CD8-positive, alpha-beta T cell (primary cell): ENCODE measurements at regions of chr2 and their contacts with region 1.

Region 1: GRCh38 chr2:149587220-149587949 is at the start of gene MMADHC:
- DNase-seq: peak; percentile 86 to 97 (median 92)
- ATAC-seq: peak; percentile 96
- H3K4me3 ChIP-seq: peak within 1 kb of the TSS; percentile 79 to 86
- H3K4me3 Mint-ChIP-seq: peak within 1 kb of the TSS; percentile 94
- H3K27ac ChIP-seq: peak within 1 kb of the TSS; percentile 88 to 95
- H3K27ac Mint-ChIP-seq: peak within 1 kb of the TSS; percentile 98
- H3K4me1 ChIP-seq: peaks cover 34% of the 10 kb centered on the region
- H3K4me1 Mint-ChIP-seq: peaks cover 44% of the 10 kb centered on the region
- H3K27me3 ChIP-seq: no peaks in the 10 kb centered on the region
- H3K27me3 Mint-ChIP-seq: peaks cover 7% of the 10 kb centered on the region
- CTCF ChIP-seq: no peak
- total RNA-seq, gene MMADHC: 74.1 to 84.7 TPM

Region 2: DNA sequence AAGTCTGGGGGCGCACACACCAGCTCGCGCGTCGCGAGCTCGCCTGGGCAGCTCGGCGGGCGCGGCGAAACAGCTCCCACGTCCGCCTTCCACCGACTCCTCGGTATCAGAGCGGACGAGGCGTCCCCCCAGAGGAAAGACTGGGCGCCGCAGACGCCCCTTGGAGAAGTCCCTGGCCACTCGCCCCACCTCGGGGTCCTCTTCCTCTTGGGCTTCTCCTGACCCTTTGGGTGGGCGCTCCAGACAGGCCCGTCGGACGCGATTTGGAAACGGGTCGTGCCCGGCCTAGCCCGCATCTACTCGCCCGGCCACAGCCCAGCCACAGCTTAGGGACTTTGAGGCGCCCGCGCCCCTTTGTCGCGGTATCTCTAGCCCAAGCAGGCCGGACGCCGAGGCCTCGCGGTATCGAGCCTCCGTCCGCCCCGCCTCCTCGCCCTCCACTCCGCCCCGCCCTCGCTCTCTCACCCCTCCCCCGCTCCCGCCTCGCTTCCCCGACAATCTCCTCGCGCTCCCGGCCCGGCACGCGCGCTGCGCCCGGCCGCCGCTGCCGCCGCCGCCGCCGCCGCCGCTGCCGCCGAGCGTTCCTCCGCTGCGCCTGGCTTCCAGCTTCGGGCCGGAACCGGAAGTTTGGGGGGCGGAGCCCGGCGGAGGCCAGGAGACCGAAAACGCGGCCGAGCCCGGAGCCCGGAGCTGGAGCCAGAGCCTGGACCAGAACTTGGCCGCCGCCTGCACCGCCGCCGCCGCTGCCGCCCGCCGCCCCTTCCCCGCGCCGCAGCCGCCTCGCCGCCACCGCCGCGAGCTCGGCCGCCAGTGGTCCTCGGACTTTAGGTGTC is 1743.3 kb before region 1 on chr2:
- CTCF ChIA-PET with region 1: no interaction called
- POLR2A ChIA-PET with region 1: no interaction called
- intact Hi-C with region 1: loop called (anchors 5 to 10 kb)
- DNase-seq: peak; percentile 71 to 90 (median 86)
- ATAC-seq: peak; percentile 80
- H3K4me3 ChIP-seq: peak overlapping the region; percentile 75 to 79
- H3K4me3 Mint-ChIP-seq: peak overlapping the region; percentile 93
- H3K27ac ChIP-seq: peak overlapping the region; percentile 51 to 54
- H3K27ac Mint-ChIP-seq: peak overlapping the region; percentile 55
- H3K4me1 ChIP-seq: peaks cover 19% of the 10 kb centered on the region
- H3K4me1 Mint-ChIP-seq: peaks cover 29% of the 10 kb centered on the region
- H3K27me3 ChIP-seq: no peaks in the 10 kb centered on the region
- H3K27me3 Mint-ChIP-seq: peaks cover 20% of the 10 kb centered on the region
- CTCF ChIP-seq: no peak

Region 3: DNA sequence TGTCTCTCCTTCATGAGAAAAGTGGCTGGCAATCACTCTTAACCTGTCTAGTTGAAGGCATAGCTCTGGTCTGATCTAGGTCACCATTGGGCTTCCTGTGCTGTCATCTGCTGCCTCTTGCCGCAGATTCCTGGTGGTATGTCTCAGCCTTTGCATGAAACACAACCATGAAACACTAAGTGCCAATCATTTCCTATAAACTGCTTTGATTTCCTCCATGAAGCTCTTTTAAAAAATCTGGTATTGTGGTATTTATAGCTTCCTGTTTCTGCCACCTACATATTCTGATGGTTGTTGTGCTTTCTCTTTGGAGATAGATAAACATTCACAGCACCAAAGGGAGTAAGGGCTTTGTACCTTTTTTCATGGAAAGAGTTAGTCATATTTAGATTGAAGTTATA is 1062.9 kb before region 1 on chr2:
- CTCF ChIA-PET with region 1: no interaction called
- POLR2A ChIA-PET with region 1: no interaction called
- intact Hi-C with region 1: loop called in 1 of 2 experiments (anchors 10 kb)
- DNase-seq: peak in 8 of 9 experiments; percentile 19 to 86 (median 60)
- ATAC-seq: peak; percentile 91
- H3K4me3 ChIP-seq: no peak overlapping the region
- H3K4me3 Mint-ChIP-seq: peak overlapping the region; percentile 53
- H3K27ac ChIP-seq: peak overlapping the region; percentile 25 to 26
- H3K27ac Mint-ChIP-seq: peak overlapping the region; percentile 84
- H3K4me1 ChIP-seq: peaks cover 90% of the 10 kb centered on the region
- H3K4me1 Mint-ChIP-seq: peaks cover 90% of the 10 kb centered on the region
- H3K27me3 ChIP-seq: no peaks in the 10 kb centered on the region
- H3K27me3 Mint-ChIP-seq: no peaks in the 10 kb centered on the region
- CTCF ChIP-seq: no peak

Region 4: GRCh38 chr2:148853458-148853857 is 733.9 kb before region 1 on chr2:
- CTCF ChIA-PET with region 1: no interaction called
- POLR2A ChIA-PET with region 1: no interaction called
- intact Hi-C with region 1: no loop called
- DNase-seq: no peak
- ATAC-seq: no peak
- H3K4me3 ChIP-seq: no peak overlapping the region
- H3K4me3 Mint-ChIP-seq: no peak overlapping the region
- H3K27ac ChIP-seq: no peak overlapping the region
- H3K27ac Mint-ChIP-seq: no peak overlapping the region
- H3K4me1 ChIP-seq: no peaks in the 10 kb centered on the region
- H3K4me1 Mint-ChIP-seq: no peaks in the 10 kb centered on the region
- H3K27me3 ChIP-seq: no peaks in the 10 kb centered on the region
- H3K27me3 Mint-ChIP-seq: peaks cover 31% of the 10 kb centered on the region
- CTCF ChIP-seq: no peak

Region 5: GRCh38 chr2:148874868-148875341 is 712.5 kb before region 1 on chr2 and contains the start of gene KIF5C:
- CTCF ChIA-PET with region 1: no interaction called
- POLR2A ChIA-PET with region 1: no interaction called
- intact Hi-C with region 1: loop called (anchors 2 to 5 kb)
- DNase-seq: peak; percentile 77 to 94 (median 87)
- ATAC-seq: peak; percentile 87
- H3K4me3 ChIP-seq: peak within 1 kb of the TSS; percentile 49 to 52
- H3K4me3 Mint-ChIP-seq: peak within 1 kb of the TSS; percentile 86
- H3K27ac ChIP-seq: no peak within 1 kb of the TSS
- H3K27ac Mint-ChIP-seq: peak within 1 kb of the TSS; percentile 41
- H3K4me1 ChIP-seq: peaks cover 12% of the 10 kb centered on the region
- H3K4me1 Mint-ChIP-seq: peaks cover 18% of the 10 kb centered on the region
- H3K27me3 ChIP-seq: peaks cover 0 to 5% of the 10 kb centered on the region in 2 experiments
- H3K27me3 Mint-ChIP-seq: peaks cover 16% of the 10 kb centered on the region
- CTCF ChIP-seq: no peak
- total RNA-seq, gene KIF5C: 6.4 to 6.5 TPM

Region 6: DNA sequence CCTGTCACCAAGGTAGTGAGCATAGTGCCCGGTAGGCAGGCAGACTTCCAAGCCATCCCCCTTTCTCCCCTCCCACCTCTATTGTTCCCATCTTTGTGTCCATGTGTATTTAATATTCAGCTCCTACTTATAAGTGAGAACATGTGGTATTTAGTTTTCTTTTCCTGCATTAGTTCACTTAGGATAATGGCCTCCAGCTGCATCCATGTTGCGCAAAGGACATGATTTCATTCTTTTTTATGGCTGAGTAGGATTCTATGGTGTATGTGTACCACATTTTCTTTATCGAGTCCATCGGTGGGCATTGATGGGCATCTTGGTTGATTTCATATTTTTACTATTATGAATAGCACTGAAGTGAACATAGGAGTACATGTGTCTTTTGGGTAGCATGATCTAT is 35.2 kb before region 1 on chr2:
- CTCF ChIA-PET with region 1: no interaction called
- POLR2A ChIA-PET with region 1: no interaction called
- intact Hi-C with region 1: no loop called
- DNase-seq: no peak
- ATAC-seq: no peak
- H3K4me3 ChIP-seq: no peak overlapping the region
- H3K4me3 Mint-ChIP-seq: no peak overlapping the region
- H3K27ac ChIP-seq: no peak overlapping the region
- H3K27ac Mint-ChIP-seq: no peak overlapping the region
- H3K4me1 ChIP-seq: no peaks in the 10 kb centered on the region
- H3K4me1 Mint-ChIP-seq: no peaks in the 10 kb centered on the region
- H3K27me3 ChIP-seq: no peaks in the 10 kb centered on the region
- H3K27me3 Mint-ChIP-seq: peaks cover 8% of the 10 kb centered on the region
- CTCF ChIP-seq: no peak

Region 7: DNA sequence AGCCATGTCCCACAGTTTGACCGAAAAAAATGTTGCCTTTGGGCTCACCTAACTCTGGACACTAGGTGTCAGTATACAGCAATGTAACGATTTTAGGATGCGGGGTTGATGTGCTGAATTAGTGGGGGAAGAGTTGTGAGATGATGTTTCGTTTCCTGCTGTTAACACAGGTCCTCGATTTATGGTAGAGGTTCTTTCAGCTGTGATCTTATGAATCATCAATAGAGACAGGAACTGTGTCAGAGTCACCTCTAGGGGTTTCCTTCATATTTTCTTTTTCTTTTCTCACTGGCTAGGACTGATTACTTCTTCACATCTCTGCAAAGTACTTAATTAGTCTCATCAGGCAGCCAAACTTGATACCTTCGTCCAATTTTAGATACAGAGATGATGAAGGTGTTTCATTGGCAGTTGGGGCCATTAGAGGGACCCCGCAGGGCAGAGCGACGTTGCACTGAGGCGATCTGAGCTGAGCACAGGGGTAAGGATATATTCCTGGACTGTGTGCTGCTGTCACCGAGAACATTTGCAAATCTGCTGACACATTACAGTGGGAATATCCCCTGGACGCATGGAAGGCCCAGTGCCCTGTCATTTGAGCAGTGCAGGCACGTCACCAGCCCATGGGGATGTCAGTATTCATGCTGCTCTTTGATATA is 10.4 kb after region 1 on chr2:
- CTCF ChIA-PET with region 1: interaction called, 11 read pairs
- POLR2A ChIA-PET with region 1: interaction called, 3 read pairs
- intact Hi-C with region 1: no loop called
- DNase-seq: peak; percentile 6 to 84 (median 45)
- ATAC-seq: peak; percentile 96
- H3K4me3 ChIP-seq: no peak overlapping the region
- H3K4me3 Mint-ChIP-seq: peak overlapping the region; percentile 53
- H3K27ac ChIP-seq: peak overlapping the region in 1 of 2 experiments; percentile 14
- H3K27ac Mint-ChIP-seq: no peak overlapping the region
- H3K4me1 ChIP-seq: peaks cover 3% of the 10 kb centered on the region
- H3K4me1 Mint-ChIP-seq: peaks cover 14% of the 10 kb centered on the region
- H3K27me3 ChIP-seq: no peaks in the 10 kb centered on the region
- H3K27me3 Mint-ChIP-seq: peaks cover 13% of the 10 kb centered on the region
- CTCF ChIP-seq: peak; percentile 82

Region 8: GRCh38 chr2:151261231-151261976 is 1674.0 kb after region 1 on chr2 and contains the start of gene RBM43:
- CTCF ChIA-PET with region 1: no interaction called
- POLR2A ChIA-PET with region 1: interaction called, 12 read pairs
- intact Hi-C with region 1: loop called (anchors 2 to 5 kb)
- DNase-seq: peak; percentile 60 to 94 (median 82)
- ATAC-seq: peak; percentile 87
- H3K4me3 ChIP-seq: peak within 1 kb of the TSS; percentile 68
- H3K4me3 Mint-ChIP-seq: peak within 1 kb of the TSS; percentile 90
- H3K27ac ChIP-seq: peak within 1 kb of the TSS; percentile 91 to 96
- H3K27ac Mint-ChIP-seq: peak within 1 kb of the TSS; percentile 98
- H3K4me1 ChIP-seq: peaks cover 5% of the 10 kb centered on the region
- H3K4me1 Mint-ChIP-seq: peaks cover 38% of the 10 kb centered on the region
- H3K27me3 ChIP-seq: no peaks in the 10 kb centered on the region
- H3K27me3 Mint-ChIP-seq: no peaks in the 10 kb centered on the region
- CTCF ChIP-seq: no peak
- total RNA-seq, gene RBM43: 12.1 to 12.4 TPM

Region 9: GRCh38 chr2:151409601-151410484 is 1822.5 kb after region 1 on chr2 and contains the start of gene RIF1:
- CTCF ChIA-PET with region 1: no interaction called
- POLR2A ChIA-PET with region 1: no interaction called
- intact Hi-C with region 1: loop called (anchors 1 to 2 kb)
- DNase-seq: peak; percentile 46 to 84 (median 70)
- ATAC-seq: peak; percentile 87
- H3K4me3 ChIP-seq: peak within 1 kb of the TSS; percentile 76 to 80
- H3K4me3 Mint-ChIP-seq: peak within 1 kb of the TSS; percentile 98
- H3K27ac ChIP-seq: peak within 1 kb of the TSS; percentile 78 to 79
- H3K27ac Mint-ChIP-seq: peak within 1 kb of the TSS; percentile 98
- H3K4me1 ChIP-seq: peaks cover 12% of the 10 kb centered on the region
- H3K4me1 Mint-ChIP-seq: peaks cover 34% of the 10 kb centered on the region
- H3K27me3 ChIP-seq: no peaks in the 10 kb centered on the region
- H3K27me3 Mint-ChIP-seq: no peaks in the 10 kb centered on the region
- CTCF ChIP-seq: peak; percentile 56
- total RNA-seq, gene RIF1: 51.6 to 53.1 TPM